ENCODE measurements at regions of chr2 and their contacts with region 1.

Region 1: DNA sequence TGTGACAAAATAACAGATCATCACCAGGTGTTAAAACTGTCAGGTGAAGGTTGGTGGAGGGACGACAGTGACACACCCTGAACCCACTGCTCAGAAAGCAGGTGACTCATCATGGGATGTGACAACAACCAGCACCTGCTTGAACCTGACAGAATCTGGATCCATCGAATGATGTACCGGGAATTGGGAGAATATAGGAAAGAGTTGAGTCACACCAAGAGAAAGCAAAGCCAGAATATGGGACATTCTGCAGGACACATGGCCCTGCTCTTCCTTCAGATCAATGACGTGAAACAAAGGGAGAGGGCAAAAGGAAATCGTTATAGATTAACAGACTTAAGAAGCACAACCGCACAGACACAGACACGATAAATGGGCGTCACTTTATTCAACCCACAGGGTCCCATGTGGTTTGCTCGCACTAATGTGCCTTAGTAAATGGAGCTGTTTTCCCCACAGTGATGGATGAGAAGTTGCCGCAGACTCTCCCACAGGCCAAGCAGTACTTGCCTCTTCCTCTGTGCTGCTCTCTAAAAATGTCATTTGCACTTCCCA is 100.1 kb downstream of the CRACDL start:
- DNase-seq: no peak
- ATAC-seq: no peak
- H3K4me3 ChIP-seq: no peak overlapping the region
- H3K27ac ChIP-seq: no peak overlapping the region
- H3K4me1 ChIP-seq: no peaks in the 10 kb centered on the region
- H3K27me3 ChIP-seq: peaks cover 0 to 10% of the 10 kb centered on the region in 2 experiments; a peak in 2 of 5 replicates
- CTCF ChIP-seq: no peak
- EP300 ChIP-seq: no peak
- POLR2A ChIP-seq: no peak
- RAD21 ChIP-seq: no peak

Region 2: GRCh38 chr2:98649135-98649991 is 186.5 kb before region 1 on chr2:
- CTCF ChIA-PET with region 1: interaction called, 27 read pairs
- POLR2A ChIA-PET with region 1: no interaction called
- in situ Hi-C with region 1: no loop called
- intact Hi-C with region 1: loop called (anchors 1 kb)
- DNase-seq: peak; percentile 42 to 72 (median 52)
- ATAC-seq: peak; percentile 90
- H3K4me3 ChIP-seq: no peak overlapping the region
- H3K27ac ChIP-seq: no peak overlapping the region
- H3K4me1 ChIP-seq: no peaks in the 10 kb centered on the region
- H3K27me3 ChIP-seq: peaks cover 0 to 5% of the 10 kb centered on the region in 2 experiments; a peak in 2 of 5 replicates
- CTCF ChIP-seq: peak; percentile 85 to 93 (median 88)
- EP300 ChIP-seq: no peak
- POLR2A ChIP-seq: no peak
- RAD21 ChIP-seq: peak; percentile 78 to 92

Region 3: DNA sequence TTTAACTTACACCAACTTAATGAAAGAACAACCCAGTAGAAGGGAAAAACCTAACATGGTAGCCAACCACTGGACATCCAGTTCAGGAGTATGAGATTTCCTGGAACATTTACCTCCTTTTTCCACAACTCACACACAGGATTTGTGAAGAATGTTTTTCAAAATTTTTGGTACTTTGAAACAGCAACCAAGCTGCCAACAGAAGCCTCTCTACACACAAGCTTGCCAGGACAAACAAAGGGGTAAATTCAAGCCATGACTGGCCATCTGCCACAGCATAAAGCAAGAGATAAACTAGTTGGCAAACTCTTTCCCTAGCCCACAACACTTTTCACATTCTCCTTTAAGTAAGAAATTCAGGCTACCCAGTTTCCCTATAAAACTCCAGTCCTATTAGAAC is 126.4 kb before region 1 on chr2:
- CTCF ChIA-PET with region 1: no interaction called
- POLR2A ChIA-PET with region 1: no interaction called
- in situ Hi-C with region 1: no loop called
- intact Hi-C with region 1: no loop called
- DNase-seq: no peak
- ATAC-seq: no peak
- H3K4me3 ChIP-seq: no peak overlapping the region
- H3K27ac ChIP-seq: no peak overlapping the region
- H3K4me1 ChIP-seq: no peaks in the 10 kb centered on the region; a peak in 1 of 5 replicates
- H3K27me3 ChIP-seq: peaks cover 17 to 27% of the 10 kb centered on the region in 2 experiments; a peak in 4 of 5 replicates
- CTCF ChIP-seq: no peak
- EP300 ChIP-seq: no peak
- POLR2A ChIP-seq: no peak
- RAD21 ChIP-seq: no peak

Measured in K562 (cell line).